ENCODE measurements at regions of chr12 and their contacts with region 1.

Region 1: DNA sequence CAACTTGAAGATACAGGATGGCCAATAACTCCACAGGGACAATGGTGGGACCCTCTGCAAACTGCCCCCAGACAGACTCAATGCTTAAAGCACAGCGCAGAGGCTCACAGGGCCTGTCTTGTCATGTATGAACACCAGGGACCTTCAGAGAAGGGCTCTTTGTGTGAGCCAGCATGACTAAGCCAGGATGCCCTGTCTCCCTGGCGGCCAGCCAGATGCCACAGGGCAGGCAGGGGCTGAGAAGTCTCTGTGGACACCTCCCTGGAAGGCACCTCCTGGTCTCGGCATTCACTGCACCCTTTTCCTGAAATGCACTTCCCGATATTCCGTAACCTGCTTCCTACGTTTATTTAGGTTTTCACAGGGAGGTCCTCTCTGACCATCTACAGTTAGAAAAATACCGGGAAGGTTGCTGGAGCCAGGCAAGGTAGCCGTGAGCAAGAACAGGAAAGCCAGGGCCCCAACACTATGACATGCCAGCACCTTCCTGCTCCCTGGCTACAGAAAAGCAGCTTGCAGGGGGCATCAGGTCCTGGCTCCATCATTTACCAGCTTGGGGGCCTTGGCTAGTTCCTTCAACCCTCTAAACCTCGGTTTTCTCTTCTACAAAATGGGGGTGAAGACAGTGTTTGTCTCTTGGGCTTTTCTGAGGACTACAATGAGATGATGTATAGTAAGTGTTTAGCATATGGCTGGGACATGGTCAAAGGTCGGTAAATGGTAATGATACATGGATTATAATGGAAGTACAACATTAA is 65.0 kb downstream of the PITPNM2 start:
- DNase-seq: peak; percentile 81 to 89
- H3K4me3 ChIP-seq: no peak overlapping the region
- H3K27ac ChIP-seq: peak overlapping the region; percentile 38
- H3K4me1 ChIP-seq: peaks cover 69% of the 10 kb centered on the region
- H3K27me3 ChIP-seq: no peaks in the 10 kb centered on the region
- CTCF ChIP-seq: no peak; the same call in 1 of the 2 replicates

Region 2: GRCh38 chr12:123024819-123025391 is 61.0 kb before region 1 on chr12:
- CTCF ChIA-PET with region 1: no interaction called
- POLR2A ChIA-PET with region 1: no interaction called
- intact Hi-C with region 1: no loop called
- DNase-seq: no peak
- H3K4me3 ChIP-seq: no peak overlapping the region
- H3K27ac ChIP-seq: no peak overlapping the region
- H3K4me1 ChIP-seq: peaks cover under 1% of the 10 kb centered on the region; the same call in 1 of the 2 replicates
- H3K27me3 ChIP-seq: no peaks in the 10 kb centered on the region
- CTCF ChIP-seq: no peak

Region 3: DNA sequence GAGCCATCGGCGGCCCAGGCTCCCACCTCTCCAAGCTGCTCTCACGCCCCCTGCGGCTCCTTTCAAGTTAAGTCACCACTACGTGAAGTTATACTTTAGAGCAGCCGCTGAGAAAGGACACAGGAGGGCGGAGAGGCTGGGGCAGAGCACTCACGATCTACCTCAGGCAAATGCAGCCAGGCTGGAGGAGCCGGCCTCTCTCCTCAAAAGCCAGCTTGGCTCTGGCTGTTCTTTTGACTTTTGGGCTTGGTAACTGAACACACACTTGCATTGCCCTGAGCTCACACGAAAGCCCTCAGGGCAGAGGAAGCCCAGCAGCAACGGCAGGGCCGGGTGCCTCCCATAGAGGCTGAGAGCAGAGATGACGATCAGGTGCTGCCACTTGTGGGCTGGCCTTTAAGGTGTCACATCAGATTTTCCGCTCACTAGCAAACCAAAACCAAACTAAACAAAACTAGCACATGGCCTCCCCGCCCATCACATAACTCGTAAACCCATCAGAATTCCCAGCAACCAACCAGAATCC is 10.2 kb before region 1 on chr12:
- CTCF ChIA-PET with region 1: interaction called, 4 read pairs
- POLR2A ChIA-PET with region 1: interaction called, 3 read pairs
- intact Hi-C with region 1: loop called (anchors 2 kb)
- DNase-seq: peak; percentile 72 to 81
- H3K4me3 ChIP-seq: no peak overlapping the region
- H3K27ac ChIP-seq: 0 out of 2 replicates have a peak overlapping the region, but pooled peaks have one; percentile 19
- H3K4me1 ChIP-seq: peaks cover 36% of the 10 kb centered on the region
- H3K27me3 ChIP-seq: no peaks in the 10 kb centered on the region
- CTCF ChIP-seq: no peak

Region 4: DNA sequence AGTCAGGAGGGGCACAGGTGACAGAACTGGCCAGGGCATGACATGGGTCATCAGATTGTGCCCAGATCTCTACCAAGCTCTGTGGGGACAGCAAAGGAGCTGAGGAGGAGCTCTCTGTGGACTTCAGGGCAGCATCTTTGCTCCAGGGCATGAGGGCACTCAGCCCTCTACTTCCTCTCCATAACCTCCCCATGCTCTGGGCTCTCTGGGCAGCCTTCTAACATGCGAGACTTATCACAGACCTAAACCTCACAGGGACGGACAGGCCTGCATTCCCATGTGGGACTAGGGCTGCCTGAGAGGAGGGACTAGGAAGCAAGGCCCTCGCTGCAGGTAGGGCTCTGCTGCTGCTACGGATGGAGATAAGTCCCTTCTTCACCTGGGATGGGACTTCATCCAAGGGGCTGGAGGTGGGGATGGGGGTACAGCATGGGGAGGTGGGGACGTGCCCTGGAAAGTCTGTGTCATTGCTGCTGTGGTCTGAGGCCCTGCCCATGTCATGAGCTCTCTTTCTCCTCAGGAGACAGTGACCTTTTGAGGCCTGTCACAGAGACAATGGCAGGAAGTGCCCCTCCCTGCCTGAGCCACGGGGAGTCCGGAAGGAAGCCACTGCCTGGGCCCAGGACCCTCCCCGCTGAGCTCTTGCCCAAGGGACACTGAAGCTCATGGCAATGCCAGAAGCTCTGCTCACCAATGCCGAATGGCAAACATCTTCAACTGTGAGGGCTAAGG is 20.9 kb after region 1 on chr12:
- CTCF ChIA-PET with region 1: no interaction called
- POLR2A ChIA-PET with region 1: interaction called, 3 read pairs
- intact Hi-C with region 1: loop called (anchors 2 kb)
- DNase-seq: peak in 1 of 2 experiments; percentile 50
- H3K4me3 ChIP-seq: no peak overlapping the region
- H3K27ac ChIP-seq: no peak overlapping the region
- H3K4me1 ChIP-seq: peaks cover 49% of the 10 kb centered on the region
- H3K27me3 ChIP-seq: no peaks in the 10 kb centered on the region
- CTCF ChIP-seq: no peak

Region 5: DNA sequence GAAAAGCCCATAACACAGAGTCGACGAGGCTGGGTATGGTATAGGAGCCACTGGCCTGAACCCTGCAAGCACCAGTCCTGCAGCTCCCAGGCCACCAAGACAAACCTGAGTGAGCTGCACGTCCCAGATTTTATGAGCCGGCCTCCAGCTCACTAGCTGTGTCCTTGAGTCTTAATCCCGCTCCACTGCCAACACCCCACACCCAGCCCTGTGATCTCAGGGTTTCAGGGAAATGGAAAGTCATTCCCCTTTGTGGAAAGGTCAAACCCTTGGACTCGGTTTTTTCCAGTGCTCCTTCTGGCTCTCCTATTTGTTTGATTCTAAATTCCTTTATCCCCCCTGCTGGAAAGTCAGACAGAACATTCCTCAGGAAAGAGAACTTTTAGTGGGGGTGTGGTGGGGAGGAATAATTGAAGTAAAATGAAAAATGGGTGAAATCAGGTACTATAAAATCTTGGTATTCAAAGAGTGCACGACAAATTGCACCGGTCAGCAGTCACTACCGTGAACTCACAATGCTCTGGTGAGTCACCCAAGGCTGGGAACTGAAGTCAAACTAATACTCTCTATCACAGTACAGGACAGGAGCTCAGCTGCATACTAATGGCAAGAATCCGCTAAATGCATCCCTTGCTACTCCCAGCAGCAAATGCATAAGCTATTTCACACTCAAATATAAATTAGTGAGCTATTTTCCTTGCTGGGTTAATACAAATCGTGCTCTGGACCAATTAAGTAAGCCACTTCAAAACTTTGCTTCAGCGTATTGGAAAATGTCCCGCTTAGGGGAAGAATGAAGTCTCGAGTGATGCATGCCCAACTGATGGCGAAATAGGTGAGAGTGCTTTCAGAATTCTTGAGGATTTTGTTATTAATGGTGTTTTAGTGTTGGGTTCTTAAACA is 56.0 kb after region 1 on chr12:
- CTCF ChIA-PET with region 1: no interaction called
- POLR2A ChIA-PET with region 1: no interaction called
- intact Hi-C with region 1: loop called (anchors 2 kb)
- DNase-seq: peak; percentile 48 to 75
- H3K4me3 ChIP-seq: peak overlapping the region; percentile 31; the same call in 1 of the 2 replicates
- H3K27ac ChIP-seq: peak overlapping the region; percentile 81
- H3K4me1 ChIP-seq: peaks cover 45% of the 10 kb centered on the region
- H3K27me3 ChIP-seq: no peaks in the 10 kb centered on the region
- CTCF ChIP-seq: no peak

Region 6: GRCh38 chr12:123401753-123402683 is 316.1 kb after region 1 on chr12:
- CTCF ChIA-PET with region 1: no interaction called
- POLR2A ChIA-PET with region 1: interaction called, 16 read pairs
- intact Hi-C with region 1: no loop called
- DNase-seq: no peak
- H3K4me3 ChIP-seq: no peak overlapping the region
- H3K27ac ChIP-seq: no peak overlapping the region
- H3K4me1 ChIP-seq: no peaks in the 10 kb centered on the region
- H3K27me3 ChIP-seq: no peaks in the 10 kb centered on the region
- CTCF ChIP-seq: no peak

Region 7: DNA sequence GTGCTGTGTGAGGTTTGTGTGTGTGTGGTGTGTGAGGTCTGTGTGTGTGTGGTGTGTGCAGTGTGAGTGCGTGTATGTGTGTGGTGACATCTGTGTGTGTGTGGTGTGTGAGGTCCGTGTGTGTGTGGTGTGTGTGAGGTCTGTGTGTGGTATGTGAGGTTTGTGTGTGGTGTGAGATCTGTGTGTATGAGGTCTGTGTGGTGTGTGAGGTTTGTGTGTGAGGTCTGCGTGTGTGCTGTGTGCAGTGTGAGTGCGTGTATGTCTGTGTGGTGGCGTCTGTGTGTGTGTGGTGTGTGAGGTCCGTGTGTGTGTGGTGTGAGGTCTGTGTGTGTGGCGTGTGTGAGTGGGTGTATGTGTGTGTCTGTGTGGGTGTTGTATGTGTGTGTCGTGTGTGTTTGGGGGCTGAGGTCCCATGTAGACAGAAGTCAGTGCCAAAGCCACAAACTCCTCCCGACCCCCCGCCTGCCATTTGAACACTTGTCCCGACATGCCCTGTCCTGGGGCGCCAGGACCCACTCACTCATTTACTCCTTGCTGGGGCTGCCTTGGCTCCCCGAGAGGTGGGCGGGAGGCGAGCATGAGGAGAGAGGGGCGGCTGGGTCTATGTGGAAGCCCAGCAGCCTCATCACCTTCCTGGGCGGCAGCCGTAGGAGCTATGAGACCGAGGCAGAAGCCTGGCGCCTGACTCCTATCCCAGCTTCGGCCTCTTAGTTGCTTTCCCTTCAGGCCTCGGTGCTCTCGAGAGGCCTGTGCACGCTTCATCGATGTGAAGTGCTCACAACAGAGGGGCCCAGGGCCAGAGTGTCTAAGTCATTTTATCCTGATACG is 427.1 kb after region 1 on chr12:
- CTCF ChIA-PET with region 1: no interaction called
- POLR2A ChIA-PET with region 1: no interaction called
- intact Hi-C with region 1: no loop called
- DNase-seq: no peak
- H3K4me3 ChIP-seq: no peak overlapping the region
- H3K27ac ChIP-seq: no peak overlapping the region
- H3K4me1 ChIP-seq: peaks cover 9% of the 10 kb centered on the region
- H3K27me3 ChIP-seq: no peaks in the 10 kb centered on the region
- CTCF ChIP-seq: no peak

Measured in PC-9 (cell line).